ENCODE measurements at regions of chr2 and their contacts with region 1.

Region 1: GRCh38 chr2:156017341-156017885 is 315.1 kb downstream of the NR4A2 start:
- DNase-seq: no peak
- ATAC-seq: no peak
- H3K4me3 ChIP-seq: no peak overlapping the region
- H3K27ac ChIP-seq: no peak overlapping the region
- H3K4me1 ChIP-seq: no peaks in the 10 kb centered on the region
- H3K27me3 ChIP-seq: no peaks in the 10 kb centered on the region
- CTCF ChIP-seq: no peak
- POLR2A ChIP-seq: no peak
- RAD21 ChIP-seq: no peak

Region 2: GRCh38 chr2:155958834-155959233 is 58.6 kb before region 1 on chr2:
- CTCF ChIA-PET with region 1: no interaction called
- POLR2A ChIA-PET with region 1: no interaction called
- dilution Hi-C with region 1: no loop called
- in situ Hi-C with region 1: no loop called
- intact Hi-C with region 1: no loop called
- DNase-seq: no peak
- ATAC-seq: no peak
- H3K4me3 ChIP-seq: no peak overlapping the region
- H3K27ac ChIP-seq: no peak overlapping the region
- H3K4me1 ChIP-seq: no peaks in the 10 kb centered on the region
- H3K27me3 ChIP-seq: no peaks in the 10 kb centered on the region
- CTCF ChIP-seq: no peak
- POLR2A ChIP-seq: no peak
- RAD21 ChIP-seq: no peak

Region 3: DNA sequence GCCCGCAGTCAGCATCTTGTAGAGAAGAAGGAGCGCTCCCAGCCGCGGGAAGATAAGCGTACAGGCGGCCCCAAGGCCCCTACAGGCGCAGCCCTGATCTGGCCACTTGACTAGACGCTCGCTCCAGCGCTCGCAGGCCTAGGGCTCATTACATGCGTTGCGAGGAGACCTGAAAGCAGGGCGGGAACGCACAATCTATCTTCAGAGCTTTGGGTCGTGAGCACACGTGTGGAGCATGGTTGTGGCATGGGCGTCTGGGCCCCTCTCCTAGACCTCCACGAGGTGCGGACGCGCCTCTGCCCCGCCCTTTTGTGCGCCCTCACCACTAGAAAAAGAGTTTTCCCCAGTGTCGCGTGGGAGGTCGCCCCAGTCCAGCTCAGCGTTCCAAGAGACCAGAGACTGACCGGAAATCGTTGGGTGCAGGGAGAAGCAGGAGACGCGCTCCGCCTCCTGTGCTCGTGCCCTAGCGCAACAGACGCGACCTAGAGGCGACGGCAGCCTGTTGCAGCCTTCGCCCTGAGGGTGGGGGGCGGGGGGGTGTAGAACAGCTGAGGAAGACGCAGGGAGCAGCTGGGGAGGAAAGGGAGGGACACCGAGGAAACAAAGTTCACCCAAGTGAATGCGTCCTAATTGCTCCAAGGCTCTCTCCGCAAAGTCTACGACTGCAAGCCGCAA is 302.5 kb after region 1 on chr2:
- CTCF ChIA-PET with region 1: no interaction called
- POLR2A ChIA-PET with region 1: interaction called, 22 read pairs
- dilution Hi-C with region 1: no loop called
- in situ Hi-C with region 1: no loop called
- intact Hi-C with region 1: no loop called
- DNase-seq: peak; percentile 49
- ATAC-seq: peak; percentile 86
- H3K4me3 ChIP-seq: peak overlapping the region; percentile 50
- H3K27ac ChIP-seq: peak overlapping the region; percentile 52
- H3K4me1 ChIP-seq: no peaks in the 10 kb centered on the region
- H3K27me3 ChIP-seq: no peaks in the 10 kb centered on the region
- CTCF ChIP-seq: 0 out of 2 replicates have a peak, but pooled peaks have one; percentile 24
- POLR2A ChIP-seq: peak; percentile 37
- RAD21 ChIP-seq: 0 out of 2 replicates have a peak, but pooled peaks have one; percentile 8

Measured in IMR-90 (cell line).